ENCODE measurements at regions of chr1 and their contacts with region 1.

Region 1: GRCh38 chr1:9280015-9280860 is 12.5 kb upstream of the SPSB1 start:
- DNase-seq: no peak
- ATAC-seq: no peak
- H3K4me3 Mint-ChIP-seq: no peak overlapping the region
- H3K27ac Mint-ChIP-seq: no peak overlapping the region
- H3K4me1 Mint-ChIP-seq: peaks cover 28% of the 10 kb centered on the region
- H3K27me3 Mint-ChIP-seq: peaks cover 18% of the 10 kb centered on the region
- CTCF ChIP-seq: no peak

Region 2: GRCh38 chr1:9225468-9225785 is 54.8 kb before region 1 on chr1:
- CTCF ChIA-PET with region 1: no interaction called
- POLR2A ChIA-PET with region 1: no interaction called
- intact Hi-C with region 1: no loop called
- DNase-seq: no peak
- ATAC-seq: no peak
- H3K4me3 Mint-ChIP-seq: no peak overlapping the region
- H3K27ac Mint-ChIP-seq: no peak overlapping the region
- H3K4me1 Mint-ChIP-seq: no peaks in the 10 kb centered on the region
- H3K27me3 Mint-ChIP-seq: peaks cover 1% of the 10 kb centered on the region
- CTCF ChIP-seq: no peak

Region 3: DNA sequence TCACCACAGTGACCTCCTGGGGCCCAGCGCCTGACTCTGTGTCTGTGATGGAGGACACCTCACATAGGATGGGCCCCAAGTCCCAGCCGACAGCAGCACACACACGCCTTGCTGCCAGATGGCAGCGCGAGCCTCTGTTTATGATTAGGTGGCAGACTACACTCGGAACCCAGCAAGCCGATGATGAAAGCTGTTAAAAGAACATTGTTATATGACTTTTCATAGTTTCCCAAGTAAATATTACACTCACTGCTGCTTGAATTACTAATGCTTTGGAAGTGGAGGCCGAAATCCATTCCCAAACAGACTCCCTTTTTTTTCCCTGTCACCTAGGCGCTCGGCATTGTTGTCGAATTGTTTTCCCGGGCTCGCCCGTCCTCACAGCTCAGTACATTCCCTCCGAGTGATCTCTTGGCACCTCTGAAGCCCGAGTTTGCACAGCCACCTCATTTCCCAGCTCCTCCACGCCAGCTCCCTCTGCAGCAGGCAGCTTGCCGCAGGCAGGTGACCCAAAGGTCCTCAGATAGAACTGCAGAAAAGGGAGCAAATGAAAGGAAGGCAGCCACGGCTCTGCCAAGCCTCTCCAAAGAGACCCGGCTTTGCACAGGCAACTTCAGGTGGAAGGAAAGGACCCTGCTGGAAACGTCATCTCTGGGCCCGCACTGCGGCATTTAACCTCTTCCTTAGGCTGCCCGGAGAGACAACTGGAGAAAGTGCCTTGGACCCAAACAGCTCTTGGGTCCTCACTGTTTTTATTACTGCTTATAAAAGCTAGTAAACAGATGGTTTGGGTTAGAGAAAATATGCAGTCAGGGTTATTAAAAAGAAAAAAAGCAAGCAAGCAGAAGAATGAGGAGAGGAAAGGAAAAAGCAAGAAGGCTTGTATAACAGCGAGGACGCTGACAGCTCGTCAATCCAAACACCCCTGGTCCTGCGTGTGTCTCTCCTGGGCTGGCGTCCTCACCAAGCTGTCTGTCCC is 186.8 kb after region 1 on chr1:
- CTCF ChIA-PET with region 1: no interaction called
- POLR2A ChIA-PET with region 1: interaction called, 11 read pairs
- intact Hi-C with region 1: no loop called
- DNase-seq: no peak
- ATAC-seq: no peak
- H3K4me3 Mint-ChIP-seq: no peak overlapping the region
- H3K27ac Mint-ChIP-seq: no peak overlapping the region
- H3K4me1 Mint-ChIP-seq: no peaks in the 10 kb centered on the region
- H3K27me3 Mint-ChIP-seq: peaks cover 14% of the 10 kb centered on the region
- CTCF ChIP-seq: no peak

Measured in activated B cell treated with CpG ODN at 0.5 μM for 24 hours (primary cell).